ENCODE measurements at regions of chr10 and their contacts with region 1.

Region 1: DNA sequence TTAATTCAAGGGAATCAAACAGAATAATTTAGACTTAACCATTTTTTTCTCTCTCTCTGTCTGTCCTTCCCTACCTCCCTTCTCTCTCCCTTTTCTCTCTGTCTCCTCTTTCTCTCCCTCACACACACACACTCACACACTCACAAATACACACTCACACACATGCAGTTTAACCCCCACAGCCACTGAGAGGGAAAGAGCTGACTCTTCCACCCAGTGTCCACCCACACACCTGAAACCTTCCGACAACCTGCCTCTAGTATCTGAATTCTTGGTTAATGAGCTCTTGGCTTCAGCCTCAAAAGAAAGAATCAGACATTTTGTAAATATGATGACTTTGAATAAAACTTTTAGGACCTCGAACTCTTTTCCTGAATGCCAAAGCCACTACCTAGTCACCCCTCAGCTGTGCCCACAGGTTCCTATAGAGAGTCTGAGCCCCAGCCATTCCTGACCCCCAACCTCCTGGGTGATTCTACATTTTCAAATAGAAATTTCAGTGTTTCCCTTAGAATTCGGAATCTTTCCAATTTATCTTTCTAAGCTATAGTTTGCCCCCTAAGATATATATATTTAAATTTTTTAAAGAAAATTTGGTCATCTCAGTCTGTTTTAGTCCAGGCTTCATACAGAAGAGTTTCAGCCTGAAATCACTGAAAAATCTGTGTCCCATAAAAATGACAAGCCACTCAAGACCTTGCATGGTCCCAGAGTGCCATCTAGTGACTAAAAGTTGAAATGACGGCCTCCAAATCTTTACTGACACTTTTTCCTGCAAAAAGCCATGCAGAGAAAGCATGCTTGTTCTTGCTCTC is 202.8 kb downstream of the IPMK start:
- DNase-seq: peak in 2 of 10 donors; percentile 5 to 14

Region 2: DNA sequence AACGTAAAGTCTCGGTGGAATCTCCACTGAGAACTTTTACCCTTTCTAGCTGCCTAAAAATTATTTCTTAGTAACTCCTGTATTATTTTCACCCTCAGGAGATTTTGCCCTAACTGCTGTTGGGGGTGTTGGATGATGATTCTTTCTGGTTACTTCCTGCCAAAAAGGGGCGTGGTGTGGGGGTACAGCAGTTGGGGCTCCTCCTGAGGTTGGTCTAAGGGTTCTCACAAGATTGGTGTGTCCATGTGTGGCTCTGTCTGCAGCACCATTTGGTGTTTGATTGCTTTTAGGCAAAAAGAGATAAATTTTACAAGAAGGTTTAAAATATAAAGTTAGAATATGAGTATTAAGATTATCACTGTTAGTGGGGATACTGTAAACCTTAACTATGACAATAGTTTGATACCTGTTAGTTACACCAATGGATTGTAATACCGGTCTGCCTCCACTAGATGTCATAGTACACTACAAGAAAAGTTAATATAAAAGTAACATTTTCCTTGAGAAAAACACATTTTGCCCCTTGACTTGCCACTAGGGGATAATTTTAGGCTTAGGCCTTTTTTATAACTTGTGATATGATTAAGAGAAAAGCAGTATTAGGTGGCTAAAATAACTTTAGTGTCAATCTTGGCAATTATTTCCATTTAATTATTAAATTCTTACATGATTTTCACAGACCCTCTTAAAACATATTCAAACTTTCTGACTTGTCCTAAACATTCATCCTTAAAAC is 725.9 kb before region 1 on chr10:
- intact Hi-C with region 1: loop called (anchors 10 kb)
- DNase-seq: no peak

Region 3: GRCh38 chr10:57579926-57580325 is 485.0 kb before region 1 on chr10:
- intact Hi-C with region 1: loop called (anchors 5 kb)
- DNase-seq: no peak

Region 4: DNA sequence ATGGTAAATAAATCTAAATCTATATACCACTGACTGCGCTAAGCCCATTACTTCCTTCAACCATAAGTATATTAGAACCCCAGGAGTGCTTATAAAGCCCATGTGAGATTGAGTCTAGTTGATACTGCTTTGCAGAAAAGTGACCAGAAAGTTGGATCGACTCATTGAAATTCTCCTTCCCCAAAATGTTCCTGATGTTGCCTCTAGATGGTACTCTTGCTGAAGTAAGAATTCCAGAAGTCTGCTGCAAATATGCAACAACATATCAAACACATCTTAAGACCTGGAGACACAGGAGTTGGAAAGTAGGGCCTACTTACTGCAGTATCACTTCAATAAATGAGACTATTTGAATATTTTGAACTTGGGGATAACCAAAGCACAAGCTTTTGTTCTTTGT is 348.0 kb before region 1 on chr10:
- intact Hi-C with region 1: loop called (anchors 5 kb)
- DNase-seq: no peak

Region 5: DNA sequence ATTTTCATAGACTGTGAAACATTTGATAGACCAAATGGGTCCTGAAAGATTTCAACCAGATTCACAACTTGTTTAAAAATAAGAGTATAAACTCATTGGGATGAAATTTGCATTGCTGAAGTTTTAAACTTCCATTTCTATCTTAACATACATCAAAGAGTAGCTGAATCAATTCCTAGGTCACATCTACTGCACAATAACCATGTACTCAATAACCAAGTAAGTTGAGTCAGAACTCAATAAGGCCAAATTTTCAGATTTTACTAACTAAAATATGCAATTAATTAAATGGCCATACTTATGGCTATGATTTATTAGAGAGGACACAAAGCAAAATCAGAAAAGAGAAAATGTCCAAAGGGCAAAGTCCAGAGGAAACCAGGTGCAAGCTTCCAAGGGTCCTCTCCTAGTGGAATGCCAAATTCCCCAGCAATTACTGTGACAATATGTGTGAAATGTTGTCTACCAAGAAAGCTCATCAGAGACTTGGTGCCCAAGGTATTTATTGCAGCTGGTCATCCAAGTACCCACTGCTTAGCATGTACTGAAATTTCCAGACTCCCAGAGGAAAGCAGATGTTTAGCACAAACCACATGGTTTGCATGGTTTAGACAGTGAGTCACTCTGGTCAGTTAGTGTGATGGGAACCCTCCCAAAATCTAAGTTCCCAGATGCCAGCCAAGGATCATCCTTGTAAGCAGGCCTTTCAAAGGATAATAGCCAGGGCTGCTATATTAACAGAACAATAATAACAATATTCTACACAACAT is 36.1 kb before region 1 on chr10:
- intact Hi-C with region 1: no loop called
- DNase-seq: no peak

Region 6: DNA sequence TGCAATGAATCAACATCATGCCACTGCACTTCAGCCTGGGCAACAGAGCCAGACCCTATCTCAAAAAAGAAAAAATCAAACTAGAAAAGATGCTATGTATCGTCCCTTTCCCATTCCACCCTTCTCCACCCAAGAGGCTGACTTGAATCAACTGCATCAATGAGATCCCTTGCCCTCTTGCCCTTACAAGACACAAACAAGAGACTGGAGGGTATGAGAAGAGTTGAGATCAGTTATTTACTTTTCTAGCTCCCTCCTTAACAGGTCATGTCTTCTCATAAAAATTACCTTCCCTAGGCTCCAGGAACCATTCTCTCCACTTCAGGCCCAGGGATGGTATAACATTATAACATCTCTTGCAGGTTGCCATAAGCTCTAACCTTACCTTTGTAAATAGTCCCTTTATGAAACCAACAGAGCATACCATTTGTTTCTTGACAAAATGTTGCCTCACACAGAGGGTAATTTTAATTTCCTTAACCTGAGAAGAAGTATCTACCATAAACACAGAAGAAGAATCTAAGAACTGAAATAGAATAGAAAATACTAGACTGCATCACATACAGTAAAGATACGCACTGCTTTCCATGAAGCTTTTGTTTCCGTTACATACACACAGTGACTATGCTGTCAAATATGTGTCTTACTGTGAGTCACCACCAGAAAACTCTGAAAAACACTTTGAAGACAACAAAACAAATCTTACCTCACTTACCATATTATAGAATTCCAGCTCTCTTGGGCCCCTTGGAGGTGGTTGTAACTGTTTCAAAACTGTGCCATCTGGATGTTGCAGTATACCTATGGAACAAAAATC is 172.3 kb after region 1 on chr10:
- intact Hi-C with region 1: no loop called
- DNase-seq: no peak

Region 7: DNA sequence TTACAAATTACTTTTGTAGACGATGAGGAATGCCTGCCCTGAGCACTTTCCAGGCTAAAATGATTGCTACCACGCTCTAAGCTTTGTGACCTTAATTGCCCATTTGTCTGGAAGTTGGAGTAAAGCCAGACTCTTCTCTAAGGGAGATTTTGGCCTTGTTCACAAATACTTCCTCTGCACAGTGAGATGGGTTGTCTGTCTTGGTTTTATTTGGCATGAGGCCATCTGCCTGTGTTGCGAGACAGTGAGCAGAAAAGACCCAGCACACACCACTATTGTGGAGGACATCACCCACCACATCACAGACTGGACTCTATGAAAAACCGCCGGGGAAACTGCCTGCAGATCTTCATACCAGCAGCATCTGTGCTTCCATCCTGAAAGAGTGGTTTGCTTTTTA is 586.1 kb after region 1 on chr10:
- intact Hi-C with region 1: no loop called
- DNase-seq: peak in 1 of 10 donors; percentile 45

Measured in posterior cingulate gyrus (tissue), 11 donors.